Kidney (tissue), 22 donors: ENCODE measurements at regions of chr19 and their contacts with region 1.

Region 1: GRCh38 chr19:44725251-44725650 is 23.3 kb upstream of the BCL3 start:
- DNase-seq: peak in 4 of 5 donors; percentile 31 to 91 (median 54)
- H3K4me3 ChIP-seq: no peak overlapping the region
- H3K27ac ChIP-seq: peak overlapping the region in 1 of 2 donors; percentile 43
- H3K4me1 ChIP-seq: peaks cover 0 to 16% (median 13%) of the 10 kb centered on the region in 3 donors
- H3K27me3 ChIP-seq: no peaks in the 10 kb centered on the region
- CTCF ChIP-seq: no peak

Region 2: GRCh38 chr19:44764975-44765948 is 40.0 kb after region 1 on chr19:
- intact Hi-C with region 1: loop called (anchors 5 kb)
- DNase-seq: no peak
- H3K4me3 ChIP-seq: no peak overlapping the region
- H3K27ac ChIP-seq: no peak overlapping the region
- H3K4me1 ChIP-seq: peaks cover 0 to 2% (median 0%) of the 10 kb centered on the region in 3 donors
- H3K27me3 ChIP-seq: no peaks in the 10 kb centered on the region
- CTCF ChIP-seq: no peak

Region 3: DNA sequence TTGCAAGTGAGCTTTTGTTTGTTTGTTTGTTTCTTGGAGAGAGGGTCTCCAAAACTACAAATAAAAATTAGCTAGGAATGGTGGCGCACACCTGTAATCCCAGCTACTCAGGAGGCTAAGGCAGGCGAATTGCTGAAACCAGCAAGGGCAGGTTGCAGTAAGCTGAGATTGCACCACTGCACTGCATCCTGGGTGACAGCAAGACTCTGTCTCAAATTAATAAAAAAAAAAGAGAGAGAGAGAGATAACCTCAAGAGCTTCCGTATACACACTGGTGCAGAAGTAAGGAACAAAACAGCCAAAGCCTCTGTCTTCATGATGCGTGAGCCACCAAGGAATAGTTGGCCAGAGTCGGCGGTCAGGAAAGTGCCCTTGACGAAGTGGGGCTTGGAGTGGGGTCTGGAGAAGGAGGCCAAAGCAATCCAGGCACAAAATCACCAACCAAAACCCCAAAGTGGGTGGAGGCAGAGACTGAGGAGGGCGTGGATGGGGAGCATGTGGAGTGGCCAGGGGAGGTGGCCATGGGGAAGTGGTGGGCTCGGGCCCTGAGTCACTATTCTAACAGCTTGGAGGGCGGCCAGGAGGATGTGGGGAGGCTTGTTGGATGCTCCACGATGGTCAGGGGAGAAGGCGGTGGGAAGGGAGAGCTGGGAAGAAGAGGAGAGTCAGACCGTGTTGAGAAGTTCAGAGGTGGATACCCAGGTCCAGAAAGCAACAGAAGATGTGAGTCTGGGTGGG is 144.7 kb after region 1 on chr19:
- intact Hi-C with region 1: no loop called
- DNase-seq: no peak
- H3K4me3 ChIP-seq: no peak overlapping the region
- H3K27ac ChIP-seq: no peak overlapping the region
- H3K4me1 ChIP-seq: no peaks in the 10 kb centered on the region
- H3K27me3 ChIP-seq: no peaks in the 10 kb centered on the region
- CTCF ChIP-seq: no peak

Region 4: GRCh38 chr19:45087531-45087930 is 362.3 kb after region 1 on chr19:
- intact Hi-C with region 1: no loop called
- DNase-seq: no peak
- H3K4me3 ChIP-seq: no peak overlapping the region
- H3K27ac ChIP-seq: no peak overlapping the region
- H3K4me1 ChIP-seq: peaks cover 0 to 8% (median 7%) of the 10 kb centered on the region in 3 donors
- H3K27me3 ChIP-seq: no peaks in the 10 kb centered on the region
- CTCF ChIP-seq: no peak